ENCODE measurements at regions of chr5 and their contacts with region 1.

Region 1: DNA sequence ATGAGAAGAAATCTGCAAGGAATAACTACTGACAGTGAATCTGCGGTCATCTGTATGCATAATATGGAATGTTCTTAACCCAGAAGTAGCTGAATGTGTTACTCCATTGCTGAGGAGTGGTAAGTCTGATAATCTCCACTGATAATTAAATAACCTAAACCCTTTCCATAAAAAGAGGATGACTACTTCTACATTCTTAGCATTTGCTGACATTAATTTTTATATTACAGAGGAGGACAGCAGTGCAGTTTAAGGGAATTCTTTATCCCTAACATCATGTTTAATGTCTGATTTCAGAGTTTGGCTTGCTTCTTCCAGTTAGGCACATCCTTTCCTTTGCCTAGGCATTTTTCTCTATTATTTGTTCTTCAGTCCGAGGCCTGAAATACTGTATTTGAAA is 52.2 kb downstream of the CDC42SE2 start:
- DNase-seq: no peak
- H3K4me3 Mint-ChIP-seq: no peak overlapping the region
- H3K27ac Mint-ChIP-seq: peak overlapping the region; percentile 98
- H3K4me1 Mint-ChIP-seq: peaks cover 39% of the 10 kb centered on the region
- H3K27me3 Mint-ChIP-seq: no peaks in the 10 kb centered on the region
- CTCF ChIP-seq: no peak

Region 2: DNA sequence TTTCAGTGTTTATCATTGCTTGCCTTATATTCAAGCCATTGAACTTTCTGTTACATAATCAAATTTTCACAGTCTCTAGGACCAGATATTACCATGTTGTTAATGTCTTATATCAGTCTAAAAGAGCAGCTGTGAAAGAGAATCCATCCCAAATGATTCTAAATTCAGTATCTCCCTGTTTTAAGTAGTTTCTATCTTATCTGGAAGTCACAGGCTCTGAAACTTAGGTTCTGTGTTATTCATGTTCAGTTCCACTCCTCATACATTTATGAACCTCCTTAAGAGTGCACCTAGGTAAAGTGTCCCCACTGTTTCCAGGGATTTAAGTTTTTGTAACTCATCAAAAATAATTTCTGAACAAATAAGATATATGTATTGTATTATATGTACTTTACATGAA is 135.6 kb before region 1 on chr5:
- CTCF ChIA-PET with region 1: no interaction called
- POLR2A ChIA-PET with region 1: no interaction called
- intact Hi-C with region 1: no loop called
- DNase-seq: no peak
- H3K4me3 Mint-ChIP-seq: no peak overlapping the region
- H3K27ac Mint-ChIP-seq: no peak overlapping the region
- H3K4me1 Mint-ChIP-seq: peaks cover 8% of the 10 kb centered on the region
- H3K27me3 Mint-ChIP-seq: no peaks in the 10 kb centered on the region
- CTCF ChIP-seq: no peak

Region 3: DNA sequence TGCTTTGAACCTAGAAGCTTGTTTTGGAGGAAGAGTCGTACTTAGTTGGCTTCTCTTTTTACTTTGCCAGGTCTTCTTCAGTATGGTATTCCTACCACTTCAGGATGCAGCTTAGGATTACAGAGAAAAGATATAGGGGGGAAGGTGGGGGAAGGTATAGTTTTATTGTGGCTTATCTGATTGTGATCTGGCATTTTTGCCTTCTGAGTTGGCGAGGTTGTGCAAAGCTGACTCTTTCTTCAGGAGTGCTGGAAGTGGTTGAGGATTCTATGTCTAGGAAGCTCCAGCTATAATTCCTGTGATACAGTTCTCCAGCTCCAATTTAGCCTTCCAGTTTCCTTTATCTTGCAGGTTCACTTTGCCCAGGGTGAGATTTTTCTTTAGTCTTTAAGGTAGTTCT is 45.2 kb before region 1 on chr5:
- CTCF ChIA-PET with region 1: interaction called, 21 read pairs
- POLR2A ChIA-PET with region 1: interaction called, 151 read pairs
- intact Hi-C with region 1: no loop called
- DNase-seq: peak; percentile 57
- H3K4me3 Mint-ChIP-seq: peak overlapping the region; percentile 13
- H3K27ac Mint-ChIP-seq: peak overlapping the region; percentile 33
- H3K4me1 Mint-ChIP-seq: peaks cover 47% of the 10 kb centered on the region
- H3K27me3 Mint-ChIP-seq: no peaks in the 10 kb centered on the region
- CTCF ChIP-seq: no peak

Region 4: GRCh38 chr5:131289738-131290137 is 26.3 kb before region 1 on chr5:
- CTCF ChIA-PET with region 1: interaction called, 5 read pairs
- POLR2A ChIA-PET with region 1: interaction called, 22 read pairs
- intact Hi-C with region 1: no loop called
- DNase-seq: no peak
- H3K4me3 Mint-ChIP-seq: no peak overlapping the region
- H3K27ac Mint-ChIP-seq: peak overlapping the region; percentile 39
- H3K4me1 Mint-ChIP-seq: peaks cover 16% of the 10 kb centered on the region
- H3K27me3 Mint-ChIP-seq: no peaks in the 10 kb centered on the region
- CTCF ChIP-seq: no peak

Region 5: GRCh38 chr5:131328536-131329285 is 12.7 kb after region 1 on chr5:
- CTCF ChIA-PET with region 1: interaction called, 5 read pairs
- POLR2A ChIA-PET with region 1: interaction called, 55 read pairs
- intact Hi-C with region 1: no loop called
- DNase-seq: peak; percentile 73
- H3K4me3 Mint-ChIP-seq: no peak overlapping the region
- H3K27ac Mint-ChIP-seq: peak overlapping the region; percentile 7
- H3K4me1 Mint-ChIP-seq: peaks cover 44% of the 10 kb centered on the region
- H3K27me3 Mint-ChIP-seq: no peaks in the 10 kb centered on the region
- CTCF ChIP-seq: no peak

Region 6: DNA sequence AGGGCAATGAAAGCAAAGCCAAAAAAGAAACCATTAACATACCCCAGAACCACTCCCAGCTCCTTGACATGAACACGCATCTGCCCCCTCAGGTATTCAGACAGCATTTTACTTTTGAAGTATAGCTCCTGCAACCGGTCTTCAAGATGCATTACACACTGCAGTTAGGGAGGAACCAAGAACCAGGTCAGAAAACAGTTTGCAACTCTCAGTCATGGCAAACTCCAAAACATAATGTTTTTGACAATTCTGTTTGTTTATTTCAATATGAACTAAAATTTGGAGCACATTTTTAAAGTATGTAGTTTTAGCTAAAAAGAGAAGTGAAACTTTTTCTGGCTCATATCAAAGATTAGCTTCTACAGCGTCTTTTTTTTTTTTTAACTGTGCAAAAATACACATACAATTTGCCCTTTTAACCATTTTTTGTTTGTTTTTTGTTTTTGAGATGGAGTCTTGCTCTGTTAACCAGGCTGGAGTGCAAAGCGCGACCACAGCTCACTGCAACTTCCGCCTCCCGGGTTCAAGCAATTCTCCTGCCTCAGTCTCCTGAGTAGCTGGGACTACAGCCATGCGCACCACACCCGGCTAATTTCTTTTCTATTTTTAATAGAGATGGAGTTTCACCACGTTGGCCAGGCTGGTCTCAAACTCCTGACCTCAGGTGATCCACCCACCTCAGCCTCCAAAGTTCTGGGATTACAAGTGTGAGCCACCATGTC is 331.2 kb after region 1 on chr5:
- CTCF ChIA-PET with region 1: no interaction called
- POLR2A ChIA-PET with region 1: no interaction called
- intact Hi-C with region 1: no loop called
- DNase-seq: no peak
- H3K4me3 Mint-ChIP-seq: no peak overlapping the region
- H3K27ac Mint-ChIP-seq: no peak overlapping the region
- H3K4me1 Mint-ChIP-seq: peaks cover 5% of the 10 kb centered on the region
- H3K27me3 Mint-ChIP-seq: no peaks in the 10 kb centered on the region
- CTCF ChIP-seq: no peak